ENCODE measurements at regions of chr19 and their contacts with region 1.

Region 1: GRCh38 chr19:45681391-45682015 is 10.2 kb downstream of the SNRPD2 start:
- DNase-seq: no peak
- H3K4me3 ChIP-seq: peak overlapping the region; percentile 40; the same call in 1 of the 2 replicates
- H3K27ac ChIP-seq: no peak overlapping the region
- H3K27me3 ChIP-seq: peaks cover 3% of the 10 kb centered on the region
- CTCF ChIP-seq: peak; percentile 92

Region 2: GRCh38 chr19:45607071-45608029 is 74.2 kb before region 1 on chr19:
- CTCF ChIA-PET with region 1: interaction called, 13 read pairs
- POLR2A ChIA-PET with region 1: no interaction called
- DNase-seq: peak; percentile 30
- H3K4me3 ChIP-seq: peak overlapping the region; percentile 41
- H3K27ac ChIP-seq: no peak overlapping the region
- H3K27me3 ChIP-seq: peaks cover 4% of the 10 kb centered on the region
- CTCF ChIP-seq: peak; percentile 94

Region 3: GRCh38 chr19:45692187-45693105 is 10.9 kb after region 1 on chr19 and contains the start of gene QPCTL:
- CTCF ChIA-PET with region 1: interaction called, 26 read pairs
- POLR2A ChIA-PET with region 1: interaction called, 5 read pairs
- DNase-seq: peak; percentile 99
- H3K4me3 ChIP-seq: peak within 1 kb of the TSS; percentile 96
- H3K27ac ChIP-seq: peak within 1 kb of the TSS; percentile 89
- H3K27me3 ChIP-seq: no peaks in the 10 kb centered on the region
- CTCF ChIP-seq: no peak
- polyA plus RNA-seq, gene QPCTL: 6.7 and 9.5 TPM in 2 replicates